Mucosa of descending colon (tissue), 3 donors: ENCODE measurements at regions of chr18 and their contacts with region 1.

Region 1: DNA sequence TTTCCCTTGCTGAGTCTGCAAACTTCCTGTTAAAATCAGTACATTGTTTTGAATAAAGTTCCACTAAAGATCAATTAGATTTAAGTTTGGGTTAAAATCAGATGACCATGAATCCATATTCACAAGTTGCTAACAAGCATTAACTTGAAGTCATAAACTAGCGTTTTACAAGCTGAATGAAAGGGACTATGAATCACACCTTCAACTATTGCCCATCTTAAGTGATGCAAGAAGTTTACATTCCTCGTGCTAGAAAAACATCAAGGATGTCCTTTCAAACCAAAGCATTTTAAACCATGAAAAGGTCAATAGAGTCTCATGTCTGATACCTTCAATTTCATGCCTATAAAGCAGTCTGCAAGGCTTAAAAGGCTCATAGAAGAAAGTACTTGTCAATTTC is 257.2 kb upstream of the SYT4 start:
- DNase-seq: no peak
- ATAC-seq: no peak
- H3K4me3 ChIP-seq: no peak overlapping the region
- H3K4me1 ChIP-seq: no peaks in the 10 kb centered on the region
- CTCF ChIP-seq: no peak

Region 2: GRCh38 chr18:43271593-43272432 is 262.7 kb before region 1 on chr18:
- intact Hi-C with region 1: loop called in 1 of 2 experiments (anchors 10 kb)
- DNase-seq: peak in 1 of 3 donors; percentile 45
- ATAC-seq: peak; percentile 36
- H3K4me3 ChIP-seq: no peak overlapping the region
- H3K4me1 ChIP-seq: no peaks in the 10 kb centered on the region
- CTCF ChIP-seq: peak; percentile 59

Region 3: DNA sequence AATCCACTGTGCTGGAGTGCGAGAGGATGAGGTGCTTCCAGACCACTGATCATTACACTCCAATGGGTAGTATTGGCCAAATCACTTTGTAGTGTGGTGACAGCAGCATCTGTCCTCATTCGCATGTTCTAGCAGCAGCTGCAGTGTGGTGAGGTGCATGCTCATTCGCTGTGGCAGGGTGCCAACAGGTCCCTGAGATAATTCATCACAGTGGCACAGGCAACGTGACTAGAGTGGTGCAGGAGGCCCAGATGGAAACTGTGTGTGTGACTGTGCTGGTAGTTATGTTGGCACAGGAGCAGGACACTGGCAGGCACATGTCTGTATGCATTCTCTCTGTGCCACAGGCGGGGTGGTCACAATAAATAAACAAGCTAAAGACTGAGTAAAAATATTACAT is 72.3 kb after region 1 on chr18:
- intact Hi-C with region 1: no loop called
- DNase-seq: no peak
- ATAC-seq: no peak
- H3K4me3 ChIP-seq: no peak overlapping the region
- H3K4me1 ChIP-seq: no peaks in the 10 kb centered on the region
- CTCF ChIP-seq: no peak

Region 4: GRCh38 chr18:43772907-43773306 is 238.4 kb after region 1 on chr18:
- intact Hi-C with region 1: no loop called
- DNase-seq: no peak
- ATAC-seq: no peak
- H3K4me3 ChIP-seq: no peak overlapping the region
- H3K4me1 ChIP-seq: no peaks in the 10 kb centered on the region
- CTCF ChIP-seq: no peak